Transverse colon (tissue), 4 donors: ENCODE measurements at regions of chr2 and their contacts with region 1.

Region 1: GRCh38 chr2:95314964-95315611 is 17.9 kb downstream of the KCNIP3 start:
- DNase-seq: peak; percentile 54
- H3K4me3 ChIP-seq: no peak overlapping the region
- H3K27ac ChIP-seq: no peak overlapping the region
- H3K4me1 ChIP-seq: no peaks in the 10 kb centered on the region
- H3K27me3 ChIP-seq: no peaks in the 10 kb centered on the region
- CTCF ChIP-seq: peak; percentile 47 to 79 (median 67)
- EP300 ChIP-seq: no peak
- POLR2A ChIP-seq: no peak

Region 2: GRCh38 chr2:95225658-95226057 is 89.4 kb before region 1 on chr2:
- in situ Hi-C with region 1: loop called in 1 of 4 experiments (anchors 10 kb)
- intact Hi-C with region 1: no loop called
- DNase-seq: no peak
- H3K4me3 ChIP-seq: no peak overlapping the region
- H3K27ac ChIP-seq: no peak overlapping the region
- H3K4me1 ChIP-seq: no peaks in the 10 kb centered on the region
- H3K27me3 ChIP-seq: no peaks in the 10 kb centered on the region
- CTCF ChIP-seq: no peak
- EP300 ChIP-seq: no peak
- POLR2A ChIP-seq: no peak